Caco-2 (cell line): ENCODE measurements at regions of chr16 and their contacts with region 1.

Region 1: GRCh38 chr16:75044800-75045430 is 46.1 kb downstream of the ZNRF1 start:
- DNase-seq: no peak
- H3K4me3 ChIP-seq: no peak overlapping the region
- H3K4me3 Mint-ChIP-seq: no peak overlapping the region
- H3K27ac Mint-ChIP-seq: no peak overlapping the region
- H3K4me1 ChIP-seq: no peaks in the 10 kb centered on the region
- H3K4me1 Mint-ChIP-seq: peaks cover 4% of the 10 kb centered on the region
- H3K27me3 ChIP-seq: no peaks in the 10 kb centered on the region
- H3K27me3 Mint-ChIP-seq: no peaks in the 10 kb centered on the region
- CTCF ChIP-seq: no peak

Region 2: GRCh38 chr16:74984535-74985296 is 60.2 kb before region 1 on chr16 and contains the start of gene WDR59:
- CTCF ChIA-PET with region 1: no interaction called
- POLR2A ChIA-PET with region 1: interaction called, 12 read pairs
- intact Hi-C with region 1: no loop called
- DNase-seq: peak; percentile 100
- H3K4me3 ChIP-seq: peak within 1 kb of the TSS; percentile 84
- H3K4me3 Mint-ChIP-seq: peak within 1 kb of the TSS; percentile 80
- H3K27ac Mint-ChIP-seq: peak within 1 kb of the TSS; percentile 85
- H3K4me1 ChIP-seq: peaks cover 35% of the 10 kb centered on the region
- H3K4me1 Mint-ChIP-seq: peaks cover 8% of the 10 kb centered on the region
- H3K27me3 ChIP-seq: no peaks in the 10 kb centered on the region
- H3K27me3 Mint-ChIP-seq: no peaks in the 10 kb centered on the region
- CTCF ChIP-seq: no peak
- total RNA-seq, gene WDR59: 148 and 174 TPM in 2 replicates

Region 3: GRCh38 chr16:75011634-75012307 is 33.1 kb before region 1 on chr16:
- CTCF ChIA-PET with region 1: no interaction called
- POLR2A ChIA-PET with region 1: no interaction called
- intact Hi-C with region 1: no loop called
- DNase-seq: no peak
- H3K4me3 ChIP-seq: no peak overlapping the region
- H3K4me3 Mint-ChIP-seq: no peak overlapping the region
- H3K27ac Mint-ChIP-seq: no peak overlapping the region
- H3K4me1 ChIP-seq: no peaks in the 10 kb centered on the region
- H3K4me1 Mint-ChIP-seq: peaks cover 20% of the 10 kb centered on the region
- H3K27me3 ChIP-seq: no peaks in the 10 kb centered on the region
- H3K27me3 Mint-ChIP-seq: no peaks in the 10 kb centered on the region
- CTCF ChIP-seq: no peak

Region 4: DNA sequence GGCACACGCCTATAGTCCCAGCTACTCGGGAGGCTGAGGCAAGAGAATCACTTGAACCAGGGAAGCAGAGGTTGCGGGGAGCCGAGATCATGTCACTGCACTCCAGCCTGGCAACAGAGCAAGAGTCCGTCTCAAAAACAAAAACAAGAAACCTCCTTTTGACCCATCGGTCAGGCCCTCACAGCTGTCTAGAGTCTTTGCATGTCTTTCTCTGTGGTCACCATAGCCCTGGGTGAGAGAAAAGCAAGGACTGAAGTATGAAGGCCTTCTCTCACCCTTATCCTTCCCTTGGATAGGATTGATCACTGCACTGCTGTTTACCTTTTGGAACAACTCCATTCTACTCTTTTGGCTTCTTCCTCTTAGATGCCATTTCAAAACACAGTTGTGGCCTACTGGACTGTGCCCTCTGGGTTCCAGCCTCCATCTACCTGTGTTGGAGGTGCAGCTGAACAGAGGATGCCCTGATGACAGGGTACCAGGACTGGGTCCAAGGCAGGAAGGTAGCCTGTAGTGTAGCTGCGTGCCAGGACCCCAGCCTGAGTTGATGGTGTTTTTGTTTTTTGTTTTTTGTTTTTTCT is 34.5 kb after region 1 on chr16:
- CTCF ChIA-PET with region 1: no interaction called
- POLR2A ChIA-PET with region 1: no interaction called
- intact Hi-C with region 1: no loop called
- DNase-seq: no peak
- H3K4me3 ChIP-seq: no peak overlapping the region
- H3K4me3 Mint-ChIP-seq: no peak overlapping the region
- H3K27ac Mint-ChIP-seq: no peak overlapping the region
- H3K4me1 ChIP-seq: no peaks in the 10 kb centered on the region; the same call in 1 of the 2 replicates
- H3K4me1 Mint-ChIP-seq: peaks cover 18% of the 10 kb centered on the region
- H3K27me3 ChIP-seq: no peaks in the 10 kb centered on the region
- H3K27me3 Mint-ChIP-seq: no peaks in the 10 kb centered on the region
- CTCF ChIP-seq: no peak